Activated CD4-positive, alpha-beta memory T cell treated with anti-CD3 and anti-CD28 coated beads for 36 hours (primary cell): ENCODE measurements at regions of chr1 and their contacts with region 1.

Region 1: DNA sequence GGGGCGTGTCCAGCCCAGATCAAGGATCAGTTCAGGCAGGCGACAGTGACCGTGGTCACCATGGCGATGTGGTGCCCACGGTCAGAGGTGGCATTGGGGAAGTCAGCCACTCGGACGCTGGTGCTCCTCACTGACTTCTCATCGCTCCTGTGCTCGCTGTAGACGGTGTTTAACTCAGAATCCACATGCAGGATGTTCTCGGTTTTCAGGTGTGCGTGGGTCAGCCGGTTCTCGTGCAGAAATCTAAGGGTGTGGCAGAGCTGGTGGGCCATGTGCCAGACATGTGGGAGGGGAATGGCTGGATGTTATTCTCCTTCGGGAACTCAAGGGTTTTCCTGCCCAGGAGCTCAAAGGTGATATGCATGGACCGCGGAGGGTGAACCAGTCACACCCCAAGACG is 11.7 kb downstream of the OR2AJ1 start:
- DNase-seq: no peak
- H3K4me3 Mint-ChIP-seq: no peak overlapping the region
- H3K27ac Mint-ChIP-seq: no peak overlapping the region
- H3K4me1 Mint-ChIP-seq: no peaks in the 10 kb centered on the region
- H3K27me3 Mint-ChIP-seq: no peaks in the 10 kb centered on the region

Region 2: DNA sequence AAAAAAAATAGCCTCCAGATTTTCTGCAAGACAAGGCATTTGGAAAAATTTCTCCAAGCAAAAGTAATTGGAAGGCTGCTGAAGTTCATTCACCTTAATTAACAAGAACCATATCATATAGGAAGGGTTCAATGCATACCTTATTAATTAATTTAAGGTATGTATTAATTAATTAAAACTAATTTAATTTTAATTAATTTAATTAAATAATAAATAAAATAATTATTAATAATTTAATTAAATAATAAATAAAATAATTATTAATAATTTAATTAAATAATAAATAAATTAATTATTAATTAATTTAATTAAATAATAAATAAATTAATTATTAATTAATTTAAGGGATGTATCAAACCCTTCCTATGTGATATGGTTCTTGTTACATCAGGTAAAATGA is 166.4 kb after region 1 on chr1:
- CTCF ChIA-PET with region 1: interaction called, 3 read pairs
- POLR2A ChIA-PET with region 1: no interaction called
- intact Hi-C with region 1: loop called (anchors 10 kb)
- DNase-seq: no peak
- H3K4me3 Mint-ChIP-seq: no peak overlapping the region
- H3K27ac Mint-ChIP-seq: no peak overlapping the region
- H3K4me1 Mint-ChIP-seq: no peaks in the 10 kb centered on the region
- H3K27me3 Mint-ChIP-seq: no peaks in the 10 kb centered on the region

Region 3: GRCh38 chr1:248155927-248156326 is 219.5 kb after region 1 on chr1:
- CTCF ChIA-PET with region 1: no interaction called
- POLR2A ChIA-PET with region 1: no interaction called
- intact Hi-C with region 1: no loop called
- DNase-seq: no peak
- H3K4me3 Mint-ChIP-seq: no peak overlapping the region
- H3K27ac Mint-ChIP-seq: no peak overlapping the region
- H3K4me1 Mint-ChIP-seq: no peaks in the 10 kb centered on the region
- H3K27me3 Mint-ChIP-seq: no peaks in the 10 kb centered on the region